Heart left ventricle (tissue), 16 donors: ENCODE measurements at regions of chr19 and their contacts with region 1.

Region 1: DNA sequence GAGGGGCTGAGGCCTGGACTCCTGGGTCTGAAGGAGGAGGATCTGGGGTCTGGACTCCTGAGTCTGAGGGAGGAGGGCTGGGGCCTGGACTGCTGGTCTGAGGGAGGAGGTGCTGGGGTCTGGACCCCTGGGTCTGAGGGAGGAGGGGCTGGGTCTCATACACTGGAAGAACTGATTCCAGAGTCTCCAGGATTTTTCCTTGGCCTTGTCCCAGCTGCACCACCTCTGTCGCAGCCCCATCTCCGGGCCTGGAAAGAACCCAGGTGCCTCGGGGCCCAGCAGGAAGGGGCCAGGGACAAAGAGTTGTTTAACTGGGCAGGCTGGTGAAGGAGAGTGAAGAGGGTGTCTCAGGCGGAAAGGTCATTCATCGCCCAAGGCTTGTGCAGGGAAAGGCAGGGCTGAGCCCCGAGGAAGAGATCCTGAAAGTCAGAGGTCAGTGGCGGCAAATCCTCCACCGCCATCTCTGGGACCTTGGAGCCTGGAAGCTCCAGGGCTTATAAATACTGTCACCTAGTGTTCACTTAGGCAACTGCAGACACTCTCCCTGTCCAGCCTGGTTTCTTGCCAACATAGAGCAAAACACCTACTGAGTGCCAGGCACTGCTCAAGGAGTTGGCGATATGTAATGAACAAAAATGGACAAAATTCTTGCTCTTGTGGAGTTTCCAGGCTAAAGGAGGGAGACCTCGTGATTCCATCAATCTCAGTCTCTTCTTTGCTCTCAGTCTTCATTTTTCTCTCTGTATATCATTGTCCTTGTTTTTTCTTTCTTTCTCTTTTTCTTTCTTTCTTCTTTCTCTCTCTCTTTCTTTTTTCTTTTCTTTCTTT is 4.4 kb upstream of the KCNN4 start:
- DNase-seq: peak in 4 of 5 donors; percentile 45 to 56 (median 51)
- ATAC-seq: peak; percentile 33 to 86 (median 81)
- H3K4me3 ChIP-seq: peak overlapping the region in 1 of 12 donors; percentile 15
- H3K27ac ChIP-seq: peak overlapping the region in 1 of 12 donors; percentile 58
- H3K4me1 ChIP-seq: peaks cover 0 to 21% (median 2%) of the 10 kb centered on the region in 12 donors
- H3K27me3 ChIP-seq: peaks cover 0 to 22% (median 0%) of the 10 kb centered on the region in 9 donors
- CTCF ChIP-seq: peak; percentile 91 to 99 (median 98)
- POLR2A ChIP-seq: no peak

Region 2: DNA sequence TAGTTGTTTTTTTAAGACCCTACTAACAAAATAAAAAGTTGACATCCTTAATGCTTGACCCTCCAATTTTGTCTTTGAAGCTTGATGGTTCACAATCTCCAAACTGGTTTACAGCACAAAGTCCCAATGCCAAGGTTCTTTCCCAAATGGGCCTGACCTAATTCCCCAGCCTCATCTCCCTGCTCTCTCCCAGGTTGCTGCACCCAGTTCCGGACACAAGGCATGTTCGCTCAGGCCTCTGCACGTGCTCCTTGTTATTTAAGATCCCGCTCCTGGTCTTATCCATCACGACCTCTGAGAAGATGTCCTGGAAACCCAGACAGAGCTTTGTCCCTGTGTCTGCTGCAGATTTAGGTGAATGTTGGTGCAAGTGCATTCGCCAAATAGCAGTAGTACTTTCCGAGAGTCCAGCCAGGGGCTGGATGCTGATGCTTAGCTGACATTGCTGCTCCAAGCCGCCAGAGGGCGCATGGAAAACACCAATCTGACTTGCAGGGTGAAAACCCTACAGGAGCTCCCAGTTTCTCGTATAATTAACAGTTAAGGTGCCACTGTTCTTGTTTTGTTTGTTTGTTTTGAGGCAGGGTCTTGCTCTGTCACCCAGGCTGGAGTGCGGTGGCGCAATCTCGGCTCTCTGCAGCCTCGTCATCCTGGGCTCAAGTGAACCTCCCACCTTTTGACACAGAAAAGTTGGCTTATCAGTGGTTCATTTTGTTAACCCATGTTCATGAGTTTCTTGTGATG is 338.3 kb before region 1 on chr19:
- intact Hi-C with region 1: loop called in 1 of 10 experiments (anchors 10 kb)
- DNase-seq: peak; percentile 70 to 90 (median 73)
- ATAC-seq: peak; percentile 70 to 89 (median 88)
- H3K4me3 ChIP-seq: no peak overlapping the region
- H3K27ac ChIP-seq: no peak overlapping the region
- H3K4me1 ChIP-seq: peaks cover 0 to 11% (median 0%) of the 10 kb centered on the region in 12 donors
- H3K27me3 ChIP-seq: no peaks in the 10 kb centered on the region
- CTCF ChIP-seq: peak; percentile 89 to 98 (median 94)
- POLR2A ChIP-seq: no peak

Region 3: DNA sequence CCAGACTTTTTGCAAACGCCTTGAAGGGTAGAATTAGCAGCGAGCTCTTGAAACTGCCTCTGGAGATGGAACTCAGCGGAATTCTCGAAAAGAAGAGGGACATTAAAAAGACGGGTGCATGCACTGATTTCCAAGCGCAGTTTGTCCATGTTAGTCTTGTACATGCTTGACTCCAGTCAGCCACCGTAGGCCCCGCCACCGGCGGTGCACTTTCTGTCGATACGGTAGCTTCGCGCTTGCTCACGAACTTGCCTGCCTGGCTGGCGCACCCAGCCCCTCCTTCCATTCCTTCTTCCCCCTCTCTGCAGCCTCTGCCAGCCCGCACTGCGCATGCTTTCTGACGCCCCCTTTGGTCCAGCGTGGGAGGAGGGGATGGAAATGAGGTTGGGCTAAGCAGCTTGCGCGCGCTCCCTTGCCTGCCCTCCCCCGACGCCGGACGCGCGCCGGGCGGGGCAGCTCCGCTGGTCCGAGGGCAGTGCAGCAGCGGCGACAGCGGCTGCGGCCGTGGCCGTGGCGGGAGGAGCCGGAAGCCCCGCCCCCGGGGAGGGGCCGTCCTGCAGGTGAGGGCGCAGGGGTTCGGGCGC is 252.1 kb before region 1 on chr19 and contains the start of gene ZNF575:
- intact Hi-C with region 1: loop called in 1 of 10 experiments (anchors 10 kb)
- DNase-seq: peak; percentile 92 to 94 (median 94)
- ATAC-seq: peak; percentile 57 to 81 (median 74)
- H3K4me3 ChIP-seq: peak within 1 kb of the TSS; percentile 35 to 72 (median 60)
- H3K27ac ChIP-seq: peak within 1 kb of the TSS; percentile 58 to 95 (median 88)
- H3K4me1 ChIP-seq: peaks cover 0 to 26% (median 12%) of the 10 kb centered on the region in 12 donors
- H3K27me3 ChIP-seq: no peaks in the 10 kb centered on the region
- CTCF ChIP-seq: peak in 1 of 12 donors; percentile 12
- POLR2A ChIP-seq: no peak
- total RNA-seq, gene ZNF575: 0.58 to 1.9 (median 1.3) TPM in 7 of 9 donors, not detected in the others

Region 4: GRCh38 chr19:43555185-43555770 is 229.9 kb before region 1 on chr19:
- intact Hi-C with region 1: loop called in 1 of 10 experiments (anchors 10 kb)
- DNase-seq: peak in 4 of 5 donors; percentile 53 to 67 (median 58)
- ATAC-seq: peak in 3 of 4 donors; percentile 38 to 58 (median 50)
- H3K4me3 ChIP-seq: no peak overlapping the region
- H3K27ac ChIP-seq: no peak overlapping the region
- H3K4me1 ChIP-seq: no peaks in the 10 kb centered on the region
- H3K27me3 ChIP-seq: no peaks in the 10 kb centered on the region
- CTCF ChIP-seq: peak; percentile 45 to 70 (median 56)
- POLR2A ChIP-seq: no peak

Region 5: DNA sequence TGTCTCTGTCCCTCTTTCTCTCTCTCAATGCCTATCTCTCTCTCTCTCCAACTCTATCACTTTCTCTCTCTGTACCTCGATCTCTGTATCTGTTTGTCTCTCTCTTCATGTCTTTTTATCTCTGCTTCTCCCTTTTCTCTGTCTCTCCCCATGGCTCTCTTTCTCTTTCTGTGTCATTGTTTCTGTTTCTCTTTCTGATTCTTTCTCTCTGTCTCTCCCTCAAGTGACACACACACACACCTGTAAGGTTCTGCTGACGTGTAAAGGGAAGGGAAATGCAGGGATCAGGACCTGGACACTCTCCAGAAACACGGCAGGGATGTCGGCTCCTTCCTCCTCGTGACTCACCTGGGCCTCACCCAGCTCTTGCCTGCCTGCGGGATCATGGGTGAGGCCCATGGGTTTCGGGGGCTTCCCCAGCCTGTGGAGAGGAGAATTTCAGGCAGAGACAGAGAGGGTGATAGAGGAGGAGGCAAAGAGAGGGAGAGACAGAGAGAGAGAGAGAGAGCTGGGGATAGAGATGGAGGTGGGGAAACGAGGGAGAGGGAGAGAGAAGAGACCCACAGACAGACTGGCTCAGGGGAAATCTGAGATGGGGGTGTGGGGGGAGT is 109.8 kb before region 1 on chr19:
- intact Hi-C with region 1: loop called in 1 of 10 experiments (anchors 10 kb)
- DNase-seq: no peak
- ATAC-seq: no peak
- H3K4me3 ChIP-seq: no peak overlapping the region
- H3K27ac ChIP-seq: peak overlapping the region in 3 of 12 donors; percentile 25 to 93 (median 62)
- H3K4me1 ChIP-seq: peaks cover 0 to 40% (median under 1%) of the 10 kb centered on the region in 12 donors
- H3K27me3 ChIP-seq: no peaks in the 10 kb centered on the region
- CTCF ChIP-seq: no peak
- POLR2A ChIP-seq: no peak

Region 6: DNA sequence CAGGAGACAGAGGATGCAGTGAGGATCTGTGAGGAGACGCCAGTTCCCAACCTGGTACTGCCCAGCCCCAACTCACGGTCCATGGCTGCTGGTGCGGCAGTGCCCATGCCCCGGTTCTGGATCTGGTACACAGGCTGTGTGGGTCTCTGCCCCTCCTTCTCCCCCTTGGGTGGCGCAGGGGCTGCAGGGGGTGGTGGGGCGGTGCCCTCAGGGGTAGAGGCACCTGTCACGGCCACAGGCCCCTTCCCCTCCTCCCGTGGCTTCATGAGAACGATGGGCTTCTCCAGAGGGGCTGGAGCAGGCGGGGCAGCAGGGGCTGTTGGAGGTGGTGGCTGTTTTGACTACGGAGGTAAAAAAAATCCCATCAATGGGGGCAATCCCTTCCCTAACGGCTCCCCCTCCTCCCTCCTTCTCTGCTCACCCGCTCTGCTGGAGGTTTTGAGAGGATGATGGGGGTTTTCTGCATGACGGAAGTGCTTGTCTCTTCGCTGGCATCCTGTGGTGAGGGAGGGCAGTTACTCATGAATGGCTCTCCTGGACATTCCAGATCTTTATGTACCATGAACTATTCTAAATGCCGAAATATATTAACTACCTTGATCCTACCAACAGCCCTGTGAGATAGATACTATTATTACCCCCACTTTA is 37.5 kb before region 1 on chr19:
- intact Hi-C with region 1: loop called (anchors 1 to 5 kb)
- DNase-seq: no peak
- ATAC-seq: no peak
- H3K4me3 ChIP-seq: no peak overlapping the region
- H3K27ac ChIP-seq: no peak overlapping the region
- H3K4me1 ChIP-seq: peaks cover 0 to 33% (median 1%) of the 10 kb centered on the region in 12 donors
- H3K27me3 ChIP-seq: no peaks in the 10 kb centered on the region
- CTCF ChIP-seq: no peak
- POLR2A ChIP-seq: no peak